CD14-positive monocyte (primary cell): ENCODE measurements at regions of chr18 and their contacts with region 1.

Region 1: DNA sequence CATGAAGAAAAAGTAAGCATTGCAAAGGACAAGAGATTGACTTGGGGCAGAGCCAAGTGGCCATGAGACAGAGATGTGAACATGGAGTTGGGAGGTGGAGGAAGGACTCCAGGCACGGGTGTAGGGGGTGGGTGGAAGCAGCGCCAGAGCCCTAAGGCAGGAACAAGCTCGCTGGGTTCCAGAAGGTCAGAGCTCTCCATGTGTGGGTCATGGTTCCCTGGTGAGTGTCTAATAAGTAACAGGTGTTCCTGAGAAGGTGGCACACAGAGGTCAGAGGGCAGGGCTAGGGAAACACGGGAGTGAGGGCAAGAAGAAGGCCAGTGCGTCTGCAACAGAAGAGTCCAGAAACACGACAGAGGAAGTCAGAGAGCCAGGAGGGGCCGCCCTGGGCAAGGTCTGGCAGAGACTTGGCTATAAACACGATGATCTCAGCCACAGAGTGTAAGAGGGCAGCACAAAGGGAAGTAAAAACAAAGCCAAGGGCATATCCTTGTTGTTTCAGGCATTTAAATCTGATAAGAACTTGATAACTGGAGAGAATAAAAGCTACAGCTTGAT is 260.8 kb downstream of the TGIF1 start:
- DNase-seq: peak; percentile 66 to 72 (median 66)
- H3K4me3 ChIP-seq: peak overlapping the region in 1 of 3 experiments; percentile 22
- H3K4me3 Mint-ChIP-seq: peak overlapping the region; percentile 9 to 81
- H3K27ac ChIP-seq: peak overlapping the region; percentile 53 to 79
- H3K27ac Mint-ChIP-seq: peak overlapping the region; percentile 84 to 96 (median 94)
- H3K4me1 ChIP-seq: peaks cover 37 to 60% of the 10 kb centered on the region in 2 donors
- H3K4me1 Mint-ChIP-seq: peaks cover 57% of the 10 kb centered on the region
- H3K27me3 ChIP-seq: no peaks in the 10 kb centered on the region
- H3K27me3 Mint-ChIP-seq: peaks cover 2 to 3% (median 2%) of the 10 kb centered on the region in 3 donors
- CTCF ChIP-seq: no peak

Region 2: GRCh38 chr18:3265564-3266033 is 445.2 kb before region 1 on chr18:
- intact Hi-C with region 1: no loop called
- DNase-seq: no peak
- H3K4me3 ChIP-seq: no peak overlapping the region
- H3K4me3 Mint-ChIP-seq: no peak overlapping the region
- H3K27ac ChIP-seq: peak overlapping the region in 1 of 2 donors; percentile 45
- H3K27ac Mint-ChIP-seq: peak overlapping the region in 4 of 7 donors; percentile 9 to 21 (median 10)
- H3K4me1 ChIP-seq: peaks cover 56 to 75% of the 10 kb centered on the region in 2 donors
- H3K4me1 Mint-ChIP-seq: peaks cover 74% of the 10 kb centered on the region
- H3K27me3 ChIP-seq: no peaks in the 10 kb centered on the region
- H3K27me3 Mint-ChIP-seq: no peaks in the 10 kb centered on the region
- CTCF ChIP-seq: no peak

Region 3: DNA sequence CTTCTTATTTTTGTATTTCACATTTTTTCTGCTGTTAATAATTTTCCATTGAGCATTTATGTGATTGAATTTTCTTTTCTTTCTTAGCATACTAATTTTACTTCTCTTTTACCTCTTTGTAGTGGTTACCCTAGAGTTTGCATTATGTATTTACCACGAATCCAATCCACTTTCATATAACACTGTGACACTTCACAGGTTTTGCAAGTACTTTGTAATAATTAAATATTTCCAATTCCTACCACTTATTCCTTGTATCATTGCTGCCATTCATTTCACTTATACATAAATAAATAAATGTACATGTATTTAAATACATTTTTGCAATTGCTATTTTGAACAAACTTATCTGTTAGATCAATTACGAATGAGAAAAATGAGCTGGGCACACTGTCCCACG is 150.0 kb before region 1 on chr18:
- intact Hi-C with region 1: no loop called
- DNase-seq: no peak
- H3K4me3 ChIP-seq: no peak overlapping the region
- H3K4me3 Mint-ChIP-seq: no peak overlapping the region
- H3K27ac ChIP-seq: no peak overlapping the region
- H3K27ac Mint-ChIP-seq: no peak overlapping the region
- H3K4me1 ChIP-seq: no peaks in the 10 kb centered on the region
- H3K4me1 Mint-ChIP-seq: no peaks in the 10 kb centered on the region
- H3K27me3 ChIP-seq: no peaks in the 10 kb centered on the region
- H3K27me3 Mint-ChIP-seq: peaks cover 1 to 3% (median 3%) of the 10 kb centered on the region in 3 donors
- CTCF ChIP-seq: no peak

Region 4: DNA sequence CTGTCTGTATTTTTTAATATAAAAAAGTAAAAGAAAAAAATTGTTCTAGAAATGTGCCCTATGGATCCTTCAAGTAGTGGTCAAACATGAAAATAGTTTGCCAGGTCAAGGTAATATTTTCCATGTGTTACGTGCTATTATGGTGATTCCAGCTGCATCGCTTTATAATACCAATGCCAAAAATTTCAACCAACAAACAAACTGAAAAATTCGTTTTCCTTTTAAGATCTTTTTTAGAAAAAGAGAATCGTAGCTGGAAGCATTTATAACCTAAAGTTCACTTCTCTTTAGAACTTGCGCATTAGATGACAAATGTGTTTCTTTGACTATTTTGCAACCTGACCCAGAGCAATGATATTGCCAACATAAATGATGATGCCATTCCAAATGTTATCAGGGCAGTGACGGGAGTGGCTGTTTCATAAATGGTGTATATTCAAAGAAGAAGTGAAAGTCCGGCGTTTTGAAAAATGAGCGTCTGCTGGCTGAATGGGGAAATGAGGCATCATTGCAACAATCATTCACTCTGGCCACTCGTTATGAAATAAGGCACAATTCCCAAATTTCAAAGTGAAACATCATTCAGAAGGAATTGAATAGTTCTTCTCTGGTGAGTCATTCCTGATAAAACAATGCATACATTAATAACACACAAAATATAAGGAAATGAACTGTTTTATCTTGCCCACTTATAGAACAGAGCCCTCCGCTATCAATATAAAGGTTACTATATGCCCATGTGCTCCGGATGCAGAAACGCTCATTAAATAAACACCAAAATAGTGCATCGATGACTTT is 36.6 kb after region 1 on chr18:
- intact Hi-C with region 1: loop called (anchors 5 kb)
- DNase-seq: peak; percentile 94 to 99 (median 98)
- H3K4me3 ChIP-seq: peak overlapping the region in 1 of 3 experiments; percentile 30
- H3K4me3 Mint-ChIP-seq: peak overlapping the region in 1 of 2 donors; percentile 42
- H3K27ac ChIP-seq: peak overlapping the region; percentile 81 to 86
- H3K27ac Mint-ChIP-seq: peak overlapping the region; percentile 87 to 97 (median 96)
- H3K4me1 ChIP-seq: peaks cover 33 to 41% of the 10 kb centered on the region in 2 donors
- H3K4me1 Mint-ChIP-seq: peaks cover 37% of the 10 kb centered on the region
- H3K27me3 ChIP-seq: no peaks in the 10 kb centered on the region
- H3K27me3 Mint-ChIP-seq: peaks cover 0 to 2% (median 0%) of the 10 kb centered on the region in 3 donors
- CTCF ChIP-seq: no peak

Region 5: GRCh38 chr18:3753106-3753505 is 42.3 kb after region 1 on chr18:
- intact Hi-C with region 1: loop called (anchors 5 kb)
- DNase-seq: no peak
- H3K4me3 ChIP-seq: no peak overlapping the region
- H3K4me3 Mint-ChIP-seq: no peak overlapping the region
- H3K27ac ChIP-seq: no peak overlapping the region
- H3K27ac Mint-ChIP-seq: peak overlapping the region in 1 of 7 donors; percentile 15
- H3K4me1 ChIP-seq: peaks cover 12 to 15% of the 10 kb centered on the region in 2 donors
- H3K4me1 Mint-ChIP-seq: peaks cover 16% of the 10 kb centered on the region
- H3K27me3 ChIP-seq: no peaks in the 10 kb centered on the region
- H3K27me3 Mint-ChIP-seq: peaks cover 0 to 7% (median 0%) of the 10 kb centered on the region in 3 donors
- CTCF ChIP-seq: no peak